ENCODE measurements at regions of chr10 and their contacts with region 1.

Region 1: GRCh38 chr10:94439275-94439861 is 37.0 kb downstream of the TBC1D12 start:
- DNase-seq: peak in 1 of 2 experiments; percentile 15
- H3K4me3 ChIP-seq: no peak overlapping the region
- H3K4me3 Mint-ChIP-seq: no peak overlapping the region
- H3K27ac Mint-ChIP-seq: no peak overlapping the region
- H3K4me1 ChIP-seq: peaks cover 24% of the 10 kb centered on the region
- H3K4me1 Mint-ChIP-seq: no peaks in the 10 kb centered on the region
- H3K27me3 ChIP-seq: no peaks in the 10 kb centered on the region
- H3K27me3 Mint-ChIP-seq: no peaks in the 10 kb centered on the region
- CTCF ChIP-seq: no peak

Region 2: DNA sequence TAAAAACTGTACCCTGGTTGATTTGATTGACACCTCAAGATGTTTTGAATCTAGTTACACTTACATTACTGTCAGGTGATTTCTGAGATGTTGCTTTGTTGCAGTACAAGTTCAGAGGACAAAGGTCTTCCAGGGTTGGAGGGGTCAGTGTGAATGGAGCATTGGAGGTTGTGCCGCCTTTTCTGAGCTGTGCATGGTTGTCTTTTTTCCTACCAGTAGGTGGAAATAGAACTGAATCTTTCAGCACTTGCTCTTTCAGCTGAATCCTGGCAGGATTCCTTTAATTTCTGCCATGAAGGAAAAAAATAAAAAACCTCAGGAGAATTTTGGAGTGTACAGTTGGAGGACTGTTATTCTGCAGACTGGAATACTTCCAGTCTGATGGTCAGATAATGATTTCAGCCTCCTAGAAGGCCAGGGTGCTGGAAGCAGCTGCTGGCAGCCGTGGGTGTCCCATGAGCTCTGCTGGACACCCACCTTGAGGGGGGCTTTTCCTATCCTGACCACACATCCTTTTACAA is 363.0 kb before region 1 on chr10:
- CTCF ChIA-PET with region 1: interaction called, 15 read pairs
- POLR2A ChIA-PET with region 1: no interaction called
- intact Hi-C with region 1: no loop called
- DNase-seq: peak; percentile 74
- H3K4me3 ChIP-seq: no peak overlapping the region
- H3K4me3 Mint-ChIP-seq: no peak overlapping the region
- H3K27ac Mint-ChIP-seq: peak overlapping the region; percentile 43
- H3K4me1 ChIP-seq: peaks cover 17% of the 10 kb centered on the region
- H3K4me1 Mint-ChIP-seq: peaks cover 15% of the 10 kb centered on the region
- H3K27me3 ChIP-seq: no peaks in the 10 kb centered on the region
- H3K27me3 Mint-ChIP-seq: no peaks in the 10 kb centered on the region
- CTCF ChIP-seq: peak; percentile 58 to 60

Region 3: DNA sequence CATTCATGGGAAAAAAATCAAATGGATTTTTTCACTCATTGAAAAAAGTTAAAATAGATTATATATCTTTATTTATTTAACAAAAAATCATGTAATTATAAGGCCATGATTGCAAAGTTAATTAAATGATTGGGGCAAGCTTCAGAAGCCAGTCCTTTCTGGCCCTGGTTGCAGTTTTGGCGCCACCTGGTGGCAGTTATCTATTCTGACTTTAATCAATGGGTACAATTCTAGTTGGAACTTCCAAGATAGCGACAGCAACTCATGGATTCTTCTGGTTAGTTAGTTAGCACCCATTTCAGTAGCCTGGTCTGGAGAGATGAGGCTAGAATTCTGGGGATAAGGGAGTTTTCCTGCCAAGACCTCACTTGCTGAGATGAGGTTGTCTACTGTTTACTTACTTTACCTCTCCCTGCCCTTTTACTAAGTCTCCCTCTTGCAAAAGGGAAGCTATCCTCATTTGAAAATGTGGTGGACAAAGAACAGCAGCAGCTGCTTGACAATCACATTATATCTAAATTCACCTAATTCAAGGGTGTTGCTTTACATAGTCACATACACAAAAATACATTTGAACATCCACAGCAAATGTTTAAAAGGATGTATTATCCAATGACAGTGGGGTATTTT is 119.0 kb before region 1 on chr10:
- CTCF ChIA-PET with region 1: interaction called, 9 read pairs
- POLR2A ChIA-PET with region 1: no interaction called
- intact Hi-C with region 1: loop called (anchors 1 kb)
- DNase-seq: peak; percentile 58 to 77
- H3K4me3 ChIP-seq: no peak overlapping the region
- H3K4me3 Mint-ChIP-seq: no peak overlapping the region
- H3K27ac Mint-ChIP-seq: no peak overlapping the region
- H3K4me1 ChIP-seq: peaks cover 15% of the 10 kb centered on the region
- H3K4me1 Mint-ChIP-seq: no peaks in the 10 kb centered on the region
- H3K27me3 ChIP-seq: no peaks in the 10 kb centered on the region
- H3K27me3 Mint-ChIP-seq: no peaks in the 10 kb centered on the region
- CTCF ChIP-seq: peak; percentile 82 to 85

Region 4: DNA sequence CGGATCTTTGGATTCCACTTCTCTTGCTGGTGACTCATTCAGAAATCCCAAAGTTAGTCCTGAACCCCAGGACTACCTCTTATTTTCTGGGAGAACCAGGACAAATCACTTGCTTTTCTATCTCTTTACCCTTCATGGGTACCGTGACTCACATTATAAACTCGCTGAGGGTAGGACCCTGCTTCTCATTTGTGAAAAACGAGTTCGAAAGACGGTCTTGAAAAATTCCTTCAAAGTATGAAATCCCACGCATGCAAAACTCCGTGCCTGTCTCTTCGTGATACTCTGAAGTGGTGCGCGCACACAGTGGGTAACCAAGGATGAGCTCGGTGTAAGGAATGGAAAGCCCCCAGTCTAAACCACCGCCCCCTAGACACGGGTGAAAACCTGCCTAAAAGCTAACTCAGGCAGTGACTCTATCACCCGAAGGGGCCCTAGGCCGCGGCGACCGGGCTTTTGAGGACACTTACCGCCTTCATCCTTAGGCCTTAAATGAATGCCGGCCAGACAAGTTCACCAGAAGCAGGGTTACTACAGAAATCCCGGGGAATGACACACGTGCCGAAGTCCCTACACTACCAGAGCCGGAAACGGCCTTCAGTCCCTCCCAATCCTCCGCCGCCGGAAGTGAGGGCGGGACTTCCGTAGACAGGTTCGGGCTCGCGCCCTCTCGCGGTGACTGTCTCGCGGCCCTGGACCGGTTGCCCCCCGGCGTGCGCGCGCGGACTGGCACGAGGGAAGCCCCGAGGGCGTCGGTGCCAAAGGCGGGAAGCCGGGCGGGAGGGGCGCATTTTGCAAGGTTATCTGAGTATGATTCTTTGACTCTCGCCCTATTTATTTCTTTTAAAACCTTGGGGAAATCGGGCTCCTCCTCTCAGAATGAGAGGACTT is 76.8 kb before region 1 on chr10 and contains the start of gene NOC3L:
- CTCF ChIA-PET with region 1: interaction called, 27 read pairs
- POLR2A ChIA-PET with region 1: interaction called, 4 read pairs
- intact Hi-C with region 1: loop called (anchors 1 kb)
- DNase-seq: peak; percentile 97 to 98
- H3K4me3 ChIP-seq: peak within 1 kb of the TSS; percentile 67
- H3K4me3 Mint-ChIP-seq: peak within 1 kb of the TSS; percentile 89
- H3K27ac Mint-ChIP-seq: peak within 1 kb of the TSS; percentile 84
- H3K4me1 ChIP-seq: peaks cover 17% of the 10 kb centered on the region
- H3K4me1 Mint-ChIP-seq: peaks cover 17% of the 10 kb centered on the region
- H3K27me3 ChIP-seq: no peaks in the 10 kb centered on the region
- H3K27me3 Mint-ChIP-seq: no peaks in the 10 kb centered on the region
- CTCF ChIP-seq: peak; percentile 81 to 89
- total RNA-seq, gene NOC3L: 39.9 and 42.3 TPM in 2 replicates

Region 5: DNA sequence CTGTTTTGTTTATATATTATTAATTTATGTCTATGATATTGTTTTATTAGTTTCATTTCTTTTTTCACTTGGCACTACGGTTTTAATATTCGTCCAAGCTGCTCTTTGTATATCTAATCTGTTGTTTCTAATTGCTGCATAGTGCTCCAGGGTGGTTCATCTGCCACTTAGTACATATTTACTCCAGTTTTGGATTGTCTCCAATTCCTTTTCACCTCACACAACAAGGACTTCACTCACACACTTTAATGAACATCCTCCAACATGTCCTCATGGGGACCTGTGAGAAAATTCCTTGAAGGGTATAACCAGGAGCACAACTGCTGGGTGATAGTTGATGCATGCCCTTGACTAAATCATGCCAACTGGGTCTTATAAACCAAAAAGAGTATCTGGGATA is 62.5 kb before region 1 on chr10:
- CTCF ChIA-PET with region 1: no interaction called
- POLR2A ChIA-PET with region 1: no interaction called
- intact Hi-C with region 1: no loop called
- DNase-seq: no peak
- H3K4me3 ChIP-seq: no peak overlapping the region
- H3K4me3 Mint-ChIP-seq: no peak overlapping the region
- H3K27ac Mint-ChIP-seq: no peak overlapping the region
- H3K4me1 ChIP-seq: peaks cover 19% of the 10 kb centered on the region
- H3K4me1 Mint-ChIP-seq: peaks cover 14% of the 10 kb centered on the region
- H3K27me3 ChIP-seq: no peaks in the 10 kb centered on the region
- H3K27me3 Mint-ChIP-seq: no peaks in the 10 kb centered on the region
- CTCF ChIP-seq: no peak

Region 6: DNA sequence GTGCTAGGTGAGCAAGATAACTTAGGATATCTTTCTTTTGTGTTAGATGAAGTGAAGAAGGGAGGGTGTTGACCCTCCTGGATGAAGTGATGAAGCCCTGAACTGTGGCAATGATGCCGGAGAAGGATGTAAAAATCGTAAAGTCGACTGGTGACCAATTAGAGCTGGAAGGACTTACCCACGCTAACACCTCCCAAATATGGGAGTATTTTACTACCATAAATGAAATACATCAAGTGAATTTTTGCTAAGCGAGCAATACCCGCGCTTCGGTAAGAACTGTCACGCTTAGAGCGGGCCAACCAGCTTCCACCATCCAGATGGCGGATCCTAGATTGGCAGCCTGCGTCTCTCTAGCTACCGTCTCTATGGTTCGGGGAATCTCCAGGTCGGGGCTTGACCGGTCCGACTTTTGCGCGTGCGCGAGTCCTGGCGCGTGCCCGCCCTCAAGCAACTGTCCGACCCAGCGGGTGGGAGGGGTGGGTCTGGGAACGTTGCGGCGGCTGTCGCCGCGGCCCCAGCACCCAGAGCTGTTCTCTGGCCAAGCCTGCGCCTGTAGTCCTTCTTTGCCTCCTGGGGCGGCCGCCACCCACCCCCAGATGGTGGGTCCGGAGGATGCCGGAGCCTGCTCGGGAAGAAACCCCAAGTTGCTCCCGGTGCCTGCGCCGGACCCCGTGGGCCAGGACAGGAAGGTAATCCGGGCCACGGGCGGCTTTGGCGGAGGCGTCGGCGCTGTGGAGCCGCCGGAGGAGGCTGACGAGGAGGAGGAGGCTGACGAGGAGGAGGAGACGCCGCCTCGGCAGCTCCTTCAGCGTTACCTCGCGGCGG is 37.1 kb before region 1 on chr10 and contains the start of gene TBC1D12:
- CTCF ChIA-PET with region 1: interaction called, 15 read pairs
- POLR2A ChIA-PET with region 1: interaction called, 16 read pairs
- intact Hi-C with region 1: loop called (anchors 2 kb)
- DNase-seq: peak; percentile 98
- H3K4me3 ChIP-seq: peak within 1 kb of the TSS; percentile 97
- H3K4me3 Mint-ChIP-seq: peak within 1 kb of the TSS; percentile 78
- H3K27ac Mint-ChIP-seq: peak within 1 kb of the TSS; percentile 92
- H3K4me1 ChIP-seq: peaks cover 45% of the 10 kb centered on the region
- H3K4me1 Mint-ChIP-seq: peaks cover 38% of the 10 kb centered on the region
- H3K27me3 ChIP-seq: no peaks in the 10 kb centered on the region
- H3K27me3 Mint-ChIP-seq: no peaks in the 10 kb centered on the region
- CTCF ChIP-seq: no peak
- total RNA-seq, gene TBC1D12: 32.1 and 33.8 TPM in 2 replicates

Region 7: DNA sequence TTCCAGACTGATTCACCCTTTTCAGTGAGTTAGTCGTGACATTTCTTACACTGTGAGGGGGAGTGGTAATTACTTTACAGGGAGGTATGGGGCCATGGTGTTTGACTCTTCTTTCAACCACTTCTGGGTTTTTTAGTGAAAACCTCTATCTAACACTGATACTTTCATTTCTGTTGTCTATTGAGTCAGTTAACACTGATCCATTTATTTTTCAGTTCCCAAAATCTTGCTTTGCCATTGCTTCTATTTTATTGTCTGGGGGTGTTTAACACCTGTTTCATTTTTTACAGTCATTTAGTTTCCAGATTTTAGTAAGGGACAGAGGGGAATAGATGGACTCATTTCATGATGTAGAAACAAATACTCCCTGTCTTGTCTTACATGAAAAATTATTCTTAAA is 167.7 kb after region 1 on chr10:
- CTCF ChIA-PET with region 1: no interaction called
- POLR2A ChIA-PET with region 1: no interaction called
- intact Hi-C with region 1: no loop called
- DNase-seq: no peak
- H3K4me3 ChIP-seq: no peak overlapping the region
- H3K4me3 Mint-ChIP-seq: no peak overlapping the region
- H3K27ac Mint-ChIP-seq: no peak overlapping the region
- H3K4me1 ChIP-seq: no peaks in the 10 kb centered on the region
- H3K4me1 Mint-ChIP-seq: no peaks in the 10 kb centered on the region
- H3K27me3 ChIP-seq: no peaks in the 10 kb centered on the region
- H3K27me3 Mint-ChIP-seq: no peaks in the 10 kb centered on the region
- CTCF ChIP-seq: no peak